ACHN (cell line): ENCODE measurements at regions of chr1 and their contacts with region 1.

Region 1: GRCh38 chr1:8015036-8015808 is 10.9 kb downstream of the ERRFI1 start:
- DNase-seq: peak; percentile 72

Region 2: DNA sequence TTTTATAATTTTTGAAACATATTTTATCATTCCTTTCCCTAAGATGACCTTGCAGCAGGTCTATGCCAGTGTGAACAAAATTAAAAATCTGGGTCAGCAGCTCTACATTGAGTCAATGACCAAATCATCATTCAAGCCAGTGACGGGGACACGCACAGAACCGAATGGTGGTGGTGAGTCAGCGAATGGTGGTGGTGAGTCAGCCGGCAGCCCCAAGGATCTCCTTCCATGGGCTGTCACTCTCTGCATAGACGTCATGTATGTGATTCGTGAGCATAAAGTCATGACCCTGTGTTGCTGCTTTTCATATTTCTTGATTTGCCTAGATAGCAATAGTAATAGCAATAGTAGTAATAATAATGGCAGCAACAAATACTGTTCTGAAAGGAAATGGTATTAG is 204.8 kb before region 1 on chr1:
- in situ Hi-C with region 1: no loop called
- DNase-seq: peak; percentile 70

Region 3: GRCh38 chr1:8314346-8315280 is 299.4 kb after region 1 on chr1:
- in situ Hi-C with region 1: loop called (anchors 10 kb)
- DNase-seq: peak; percentile 61